Ascending aorta (tissue), 2 donors: ENCODE measurements at regions of chr21 and their contacts with region 1.

Region 1: DNA sequence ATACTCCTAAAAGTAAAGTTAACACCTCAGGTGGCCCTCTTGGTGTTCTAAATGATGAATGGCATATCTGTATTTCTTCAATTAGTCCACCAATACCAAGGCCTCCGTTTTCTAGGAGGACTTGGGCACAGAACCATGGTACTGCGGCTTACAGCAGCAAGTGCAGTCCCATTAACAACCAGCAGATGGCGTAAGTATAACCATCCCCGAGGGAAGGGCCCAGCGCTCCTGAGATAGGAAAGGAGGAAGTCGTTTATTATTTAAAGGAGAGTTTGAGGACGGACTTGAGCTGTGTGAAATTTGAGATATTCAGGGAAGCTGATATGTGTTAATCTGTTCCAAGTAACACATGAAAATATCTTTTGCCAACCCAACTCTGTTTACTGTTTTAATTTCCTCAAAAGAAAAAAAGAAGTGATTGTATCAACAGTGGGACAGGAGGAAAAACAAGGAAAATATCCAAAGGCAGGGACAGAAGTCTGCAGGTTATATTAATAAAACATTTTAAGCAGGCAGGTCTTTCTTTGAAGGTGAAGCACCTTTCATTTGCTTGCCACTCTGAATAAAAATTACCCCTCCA is 37.7 kb upstream of the KCNJ15 start:
- DNase-seq: peak in 1 of 2 donors; percentile 85
- H3K4me3 ChIP-seq: no peak overlapping the region
- H3K27ac ChIP-seq: peak overlapping the region; percentile 52 to 57
- H3K4me1 ChIP-seq: peaks cover 2 to 9% of the 10 kb centered on the region in 2 donors
- H3K27me3 ChIP-seq: no peaks in the 10 kb centered on the region
- CTCF ChIP-seq: peak; percentile 89 to 96 (median 96)

Region 2: GRCh38 chr21:38170280-38170679 is 48.9 kb before region 1 on chr21:
- intact Hi-C with region 1: loop called (anchors 5 kb)
- DNase-seq: no peak
- H3K4me3 ChIP-seq: no peak overlapping the region
- H3K27ac ChIP-seq: peak overlapping the region in 1 of 2 donors; percentile 51
- H3K4me1 ChIP-seq: peaks cover 0 to 28% of the 10 kb centered on the region in 2 donors
- H3K27me3 ChIP-seq: no peaks in the 10 kb centered on the region
- CTCF ChIP-seq: peak in 2 of 3 experiments; percentile 11 to 62

Region 3: GRCh38 chr21:38205940-38206339 is 13.2 kb before region 1 on chr21:
- intact Hi-C with region 1: no loop called
- DNase-seq: no peak
- H3K4me3 ChIP-seq: no peak overlapping the region
- H3K27ac ChIP-seq: no peak overlapping the region
- H3K4me1 ChIP-seq: no peaks in the 10 kb centered on the region
- H3K27me3 ChIP-seq: no peaks in the 10 kb centered on the region
- CTCF ChIP-seq: no peak

Region 4: DNA sequence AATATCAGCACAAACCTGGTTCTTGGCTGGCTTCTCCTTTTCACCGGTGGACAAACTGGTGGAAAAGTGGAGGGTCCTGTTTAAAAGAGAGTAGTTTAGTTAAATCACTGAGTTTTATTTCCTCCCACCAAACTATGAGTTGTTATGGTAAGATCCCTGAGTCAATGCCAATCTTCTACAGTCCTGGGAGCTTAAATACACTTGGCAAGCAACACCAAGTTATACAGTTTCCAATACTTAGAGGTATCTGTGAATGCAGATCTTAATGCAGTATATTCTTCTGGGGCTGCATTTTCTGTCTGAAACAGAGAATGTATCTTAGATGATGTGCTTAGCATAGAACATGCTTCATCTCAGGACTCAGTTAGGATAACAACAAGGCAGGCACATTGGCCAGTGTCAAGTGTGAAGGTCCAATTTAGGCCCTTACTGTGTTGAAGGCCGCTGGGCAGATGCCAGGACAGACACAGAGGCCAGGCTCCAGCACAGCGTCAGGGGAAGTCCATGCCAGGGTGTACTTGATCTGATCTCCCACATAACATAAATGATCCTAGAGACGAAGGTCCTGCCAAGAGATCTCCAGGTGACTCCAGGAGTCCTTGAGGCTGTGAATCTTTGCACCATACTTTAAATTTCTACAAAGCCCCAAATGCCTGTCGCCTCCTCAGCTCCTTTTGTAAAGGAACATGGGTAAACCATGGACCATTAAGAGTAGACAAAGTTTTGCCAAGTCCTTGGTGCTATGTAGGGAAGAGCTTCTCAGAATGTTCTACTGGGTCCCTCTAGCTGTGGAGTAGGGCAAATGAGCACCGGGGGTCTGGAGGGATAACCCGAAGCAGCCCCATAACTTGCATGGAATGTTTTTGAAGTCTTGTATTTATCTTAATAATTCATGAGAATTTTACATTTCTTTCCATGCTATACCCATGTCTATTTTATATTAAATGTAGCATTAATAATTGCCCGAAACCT is 114.4 kb after region 1 on chr21:
- intact Hi-C with region 1: no loop called
- DNase-seq: peak in 1 of 2 donors; percentile 52
- H3K4me3 ChIP-seq: no peak overlapping the region
- H3K27ac ChIP-seq: no peak overlapping the region
- H3K4me1 ChIP-seq: no peaks in the 10 kb centered on the region
- H3K27me3 ChIP-seq: no peaks in the 10 kb centered on the region
- CTCF ChIP-seq: no peak